SK-N-SH (cell line): ENCODE measurements at regions of chr16 and their contacts with region 1.

Region 1: GRCh38 chr16:89860747-89861304 is 12.6 kb upstream of the TCF25 start:
- DNase-seq: peak; percentile 95
- H3K4me3 ChIP-seq: peak overlapping the region in 1 of 2 experiments; percentile 25; a peak in 1 of 4 replicates
- H3K27ac ChIP-seq: no peak overlapping the region
- H3K4me1 ChIP-seq: no peaks in the 10 kb centered on the region
- H3K27me3 ChIP-seq: no peaks in the 10 kb centered on the region
- CTCF ChIP-seq: peak; percentile 95
- EP300 ChIP-seq: no peak
- RAD21 ChIP-seq: peak; percentile 88

Region 2: DNA sequence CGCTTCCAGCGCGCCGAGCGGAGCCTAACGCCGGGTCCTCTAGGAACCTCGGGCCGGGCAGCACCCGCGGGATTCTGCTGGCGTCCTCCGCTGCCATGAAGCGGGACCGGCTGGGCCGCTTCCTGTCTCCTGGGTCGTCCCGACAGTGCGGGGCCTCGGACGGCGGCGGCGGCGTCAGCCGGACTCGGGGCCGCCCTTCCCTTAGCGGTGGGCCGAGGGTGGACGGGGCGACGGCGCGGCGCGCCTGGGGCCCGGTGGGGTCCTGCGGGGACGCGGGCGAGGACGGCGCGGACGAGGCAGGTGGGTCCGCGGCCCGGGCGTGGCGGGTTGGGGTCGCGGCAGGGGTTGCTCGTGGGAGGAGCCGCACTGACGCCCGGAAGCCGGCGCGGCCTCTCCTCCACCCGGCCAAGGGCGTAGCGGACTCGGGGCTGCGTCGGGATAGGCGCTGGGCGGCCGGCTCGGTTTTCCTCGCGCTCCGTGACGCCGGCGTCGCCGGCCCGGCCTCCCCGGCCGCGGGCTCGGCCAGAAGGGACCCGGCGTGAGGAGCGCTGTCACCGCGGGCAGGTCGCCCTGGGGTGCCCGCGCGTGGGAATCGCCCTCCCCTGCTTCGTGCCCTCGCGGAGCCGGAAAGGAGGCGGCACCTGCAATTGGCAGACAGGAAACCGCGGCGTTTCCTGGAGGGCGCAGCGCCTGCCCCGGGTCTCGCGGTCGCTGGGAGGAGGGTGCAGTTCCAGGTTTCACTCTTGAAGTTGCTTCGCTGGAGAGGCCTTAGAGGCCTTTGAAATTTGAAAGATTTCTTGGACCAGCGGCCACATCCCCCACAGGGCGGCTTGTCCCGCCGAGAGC is 139.1 kb before region 1 on chr16:
- CTCF ChIA-PET with region 1: interaction called, 13 read pairs
- POLR2A ChIA-PET with region 1: no interaction called
- DNase-seq: peak; percentile 75
- H3K4me3 ChIP-seq: peak overlapping the region; percentile 74 to 92
- H3K27ac ChIP-seq: peak overlapping the region; percentile 79 to 92
- H3K4me1 ChIP-seq: peaks cover 21 to 25% of the 10 kb centered on the region in 2 experiments; a peak in 3 of 4 replicates
- H3K27me3 ChIP-seq: no peaks in the 10 kb centered on the region
- CTCF ChIP-seq: no peak
- EP300 ChIP-seq: no peak
- RAD21 ChIP-seq: no peak

Region 3: DNA sequence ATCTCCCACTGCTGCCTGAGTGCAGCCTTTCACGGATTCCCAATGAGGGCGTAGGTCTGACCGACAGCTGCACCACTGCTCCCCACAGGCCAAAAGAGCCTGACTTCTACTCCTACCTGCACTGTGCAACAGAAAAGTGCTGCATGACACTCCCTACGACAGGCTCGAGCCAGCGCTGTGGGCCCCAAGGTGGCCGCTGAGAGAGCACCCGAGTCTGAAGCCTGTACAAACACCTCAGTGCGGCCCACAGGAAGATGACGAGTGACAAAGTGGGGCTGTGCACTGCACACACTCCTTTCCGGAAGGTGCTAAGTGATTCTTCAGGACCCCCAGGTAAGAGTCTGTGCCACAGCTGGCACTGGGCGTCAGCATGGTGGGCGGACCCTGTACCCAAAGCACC is 85.6 kb before region 1 on chr16:
- CTCF ChIA-PET with region 1: interaction called, 27 read pairs
- POLR2A ChIA-PET with region 1: no interaction called
- DNase-seq: no peak
- H3K4me3 ChIP-seq: no peak overlapping the region
- H3K27ac ChIP-seq: no peak overlapping the region
- H3K4me1 ChIP-seq: peaks cover 0 to 15% of the 10 kb centered on the region in 2 experiments; a peak in 1 of 4 replicates
- H3K27me3 ChIP-seq: no peaks in the 10 kb centered on the region
- CTCF ChIP-seq: no peak
- EP300 ChIP-seq: no peak
- RAD21 ChIP-seq: no peak

Region 4: GRCh38 chr16:89805136-89805905 is 55.5 kb before region 1 on chr16:
- CTCF ChIA-PET with region 1: interaction called, 33 read pairs
- POLR2A ChIA-PET with region 1: no interaction called
- DNase-seq: no peak
- H3K4me3 ChIP-seq: no peak overlapping the region
- H3K27ac ChIP-seq: peak overlapping the region in 1 of 2 experiments; percentile 20; a peak in 1 of 4 replicates
- H3K4me1 ChIP-seq: peaks cover 0 to 6% of the 10 kb centered on the region in 2 experiments; a peak in 1 of 4 replicates
- H3K27me3 ChIP-seq: no peaks in the 10 kb centered on the region
- CTCF ChIP-seq: no peak
- EP300 ChIP-seq: no peak
- RAD21 ChIP-seq: no peak

Region 5: GRCh38 chr16:89828199-89828778 is 32.5 kb before region 1 on chr16 and contains the start of gene SPIRE2:
- CTCF ChIA-PET with region 1: interaction called, 13 read pairs
- POLR2A ChIA-PET with region 1: no interaction called
- DNase-seq: peak; percentile 95
- H3K4me3 ChIP-seq: peak within 1 kb of the TSS; percentile 74 to 81
- H3K27ac ChIP-seq: peak within 1 kb of the TSS; percentile 54 to 80
- H3K4me1 ChIP-seq: peaks cover 0 to 14% of the 10 kb centered on the region in 2 experiments; a peak in 1 of 4 replicates
- H3K27me3 ChIP-seq: no peaks in the 10 kb centered on the region
- CTCF ChIP-seq: no peak
- EP300 ChIP-seq: no peak
- RAD21 ChIP-seq: no peak
- polyA plus RNA-seq, gene SPIRE2: 15.3 and 16.2 TPM in 2 replicates

Region 6: DNA sequence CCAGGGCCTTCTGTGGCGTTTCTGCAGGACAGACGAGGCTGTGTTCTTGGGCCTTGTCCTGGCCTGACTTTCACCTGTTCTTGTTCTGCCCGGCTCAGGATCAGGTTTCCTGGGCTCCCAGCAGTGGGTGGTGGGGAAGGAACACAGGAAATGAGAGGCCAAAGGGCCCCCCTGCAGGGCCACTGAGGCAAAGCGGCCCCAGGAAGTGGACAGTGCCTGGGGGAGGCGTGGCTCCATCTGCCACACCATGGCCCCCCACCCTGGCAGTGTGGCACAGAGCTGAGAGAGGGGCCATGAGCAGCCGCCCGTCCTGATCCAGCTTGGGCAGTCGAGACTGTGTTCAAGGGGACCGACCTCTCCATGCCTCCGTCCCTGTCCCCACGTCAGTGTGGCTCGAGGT is 11.8 kb before region 1 on chr16:
- CTCF ChIA-PET with region 1: interaction called, 68 read pairs
- POLR2A ChIA-PET with region 1: no interaction called
- DNase-seq: no peak
- H3K4me3 ChIP-seq: no peak overlapping the region
- H3K27ac ChIP-seq: no peak overlapping the region
- H3K4me1 ChIP-seq: no peaks in the 10 kb centered on the region; a peak in 1 of 4 replicates
- H3K27me3 ChIP-seq: no peaks in the 10 kb centered on the region
- CTCF ChIP-seq: no peak
- EP300 ChIP-seq: no peak
- RAD21 ChIP-seq: no peak

Region 7: GRCh38 chr16:90012978-90013745 is 152.3 kb after region 1 on chr16:
- CTCF ChIA-PET with region 1: no interaction called
- POLR2A ChIA-PET with region 1: no interaction called
- DNase-seq: no peak
- H3K4me3 ChIP-seq: no peak overlapping the region
- H3K27ac ChIP-seq: no peak overlapping the region
- H3K4me1 ChIP-seq: peaks cover 0 to 23% of the 10 kb centered on the region in 2 experiments; a peak in 1 of 4 replicates
- H3K27me3 ChIP-seq: no peaks in the 10 kb centered on the region
- CTCF ChIP-seq: no peak
- EP300 ChIP-seq: no peak
- RAD21 ChIP-seq: no peak